ENCODE measurements at regions of chr12 and their contacts with region 1.

Region 1: DNA sequence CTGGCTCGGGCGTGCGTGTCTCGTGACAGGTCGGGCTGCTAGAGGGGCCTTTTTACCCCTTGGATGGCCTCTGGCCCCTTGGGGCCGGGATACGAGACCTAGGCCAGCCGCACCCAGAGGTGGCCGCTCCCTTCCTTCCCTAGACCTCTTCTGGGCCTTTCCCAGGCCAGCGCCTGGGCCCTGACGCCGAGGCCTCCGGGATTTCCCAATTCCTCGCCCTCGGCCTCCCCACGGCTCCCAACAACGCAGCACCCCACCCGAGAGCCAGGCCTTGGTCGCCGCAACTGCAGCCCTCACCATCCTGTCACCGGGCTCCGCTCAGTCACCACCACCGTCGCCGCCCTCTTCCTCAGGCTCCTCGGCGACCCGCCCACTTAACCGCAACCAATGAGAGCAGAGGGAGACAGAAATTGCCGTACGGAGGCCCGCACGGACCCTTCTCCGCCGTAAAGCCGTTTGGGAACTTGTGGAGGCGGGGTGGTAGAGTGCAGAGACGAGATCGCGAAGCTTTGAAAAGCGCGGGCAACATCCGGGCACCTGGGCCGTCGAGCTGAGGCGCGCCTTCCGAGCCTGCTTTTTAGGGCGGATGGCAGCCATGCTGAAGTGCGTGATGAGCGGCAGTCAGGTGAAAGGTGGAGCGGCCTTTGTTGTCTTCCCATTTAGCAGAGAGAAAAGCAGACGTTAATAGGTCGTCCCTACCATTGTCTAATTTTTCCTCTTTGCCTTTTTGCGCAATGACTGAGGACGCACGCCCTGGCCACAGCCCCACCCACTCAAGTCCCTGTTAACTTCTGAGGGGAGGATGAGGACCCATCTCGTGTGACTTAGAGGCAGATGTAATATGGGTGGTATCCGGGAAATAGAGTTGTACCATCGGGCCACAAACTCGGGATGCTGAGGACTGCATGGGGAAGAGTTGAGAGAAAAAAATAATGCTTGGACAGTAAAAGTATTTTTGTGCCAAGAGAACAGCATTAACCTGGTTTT is at the starts of genes RAD9B and VPS29:
- DNase-seq: peak; percentile 98
- H3K4me3 Mint-ChIP-seq: peak within 1 kb of the TSS; percentile 92
- H3K27ac Mint-ChIP-seq: peak within 1 kb of the TSS; percentile 96
- H3K4me1 Mint-ChIP-seq: peaks cover 14% of the 10 kb centered on the region
- H3K27me3 Mint-ChIP-seq: no peaks in the 10 kb centered on the region
- CTCF ChIP-seq: no peak
- total RNA-seq, gene RAD9B: 1.0 and 1.5 TPM in 2 replicates
- total RNA-seq, gene VPS29: 125 and 131 TPM in 2 replicates

Region 2: GRCh38 chr12:110449799-110450497 is 52.1 kb before region 1 on chr12 and contains the start of gene ARPC3:
- CTCF ChIA-PET with region 1: interaction called, 5 read pairs
- POLR2A ChIA-PET with region 1: interaction called, 49 read pairs
- intact Hi-C with region 1: no loop called
- DNase-seq: peak; percentile 93
- H3K4me3 Mint-ChIP-seq: peak within 1 kb of the TSS; percentile 99
- H3K27ac Mint-ChIP-seq: peak within 1 kb of the TSS; percentile 100
- H3K4me1 Mint-ChIP-seq: peaks cover 5% of the 10 kb centered on the region
- H3K27me3 Mint-ChIP-seq: no peaks in the 10 kb centered on the region
- CTCF ChIP-seq: peak; percentile 83
- total RNA-seq, gene ARPC3: 230 and 245 TPM in 2 replicates

Region 3: DNA sequence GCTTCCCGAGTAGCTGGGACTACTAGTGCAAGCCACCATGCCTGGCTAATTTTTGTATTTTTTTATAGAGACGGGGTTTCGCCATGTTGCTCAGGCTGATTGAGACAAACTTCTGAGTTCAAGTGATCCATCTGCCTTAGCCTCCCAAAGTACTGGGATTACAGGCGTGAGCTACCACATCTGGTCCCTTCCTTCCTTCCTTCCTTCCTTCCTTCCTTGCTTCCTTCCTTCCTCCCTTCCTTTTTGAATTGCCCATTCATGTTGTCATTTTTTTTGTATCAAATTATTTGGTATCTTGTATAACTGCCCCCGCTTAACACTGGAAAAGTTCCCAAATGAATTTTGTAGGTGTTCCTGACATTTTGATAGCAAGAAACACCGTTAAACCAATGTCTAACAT is 11.8 kb after region 1 on chr12:
- CTCF ChIA-PET with region 1: interaction called, 12 read pairs
- POLR2A ChIA-PET with region 1: interaction called, 18 read pairs
- intact Hi-C with region 1: no loop called
- DNase-seq: no peak
- H3K4me3 Mint-ChIP-seq: no peak overlapping the region
- H3K27ac Mint-ChIP-seq: peak overlapping the region; percentile 4
- H3K4me1 Mint-ChIP-seq: no peaks in the 10 kb centered on the region
- H3K27me3 Mint-ChIP-seq: no peaks in the 10 kb centered on the region
- CTCF ChIP-seq: no peak

Region 4: DNA sequence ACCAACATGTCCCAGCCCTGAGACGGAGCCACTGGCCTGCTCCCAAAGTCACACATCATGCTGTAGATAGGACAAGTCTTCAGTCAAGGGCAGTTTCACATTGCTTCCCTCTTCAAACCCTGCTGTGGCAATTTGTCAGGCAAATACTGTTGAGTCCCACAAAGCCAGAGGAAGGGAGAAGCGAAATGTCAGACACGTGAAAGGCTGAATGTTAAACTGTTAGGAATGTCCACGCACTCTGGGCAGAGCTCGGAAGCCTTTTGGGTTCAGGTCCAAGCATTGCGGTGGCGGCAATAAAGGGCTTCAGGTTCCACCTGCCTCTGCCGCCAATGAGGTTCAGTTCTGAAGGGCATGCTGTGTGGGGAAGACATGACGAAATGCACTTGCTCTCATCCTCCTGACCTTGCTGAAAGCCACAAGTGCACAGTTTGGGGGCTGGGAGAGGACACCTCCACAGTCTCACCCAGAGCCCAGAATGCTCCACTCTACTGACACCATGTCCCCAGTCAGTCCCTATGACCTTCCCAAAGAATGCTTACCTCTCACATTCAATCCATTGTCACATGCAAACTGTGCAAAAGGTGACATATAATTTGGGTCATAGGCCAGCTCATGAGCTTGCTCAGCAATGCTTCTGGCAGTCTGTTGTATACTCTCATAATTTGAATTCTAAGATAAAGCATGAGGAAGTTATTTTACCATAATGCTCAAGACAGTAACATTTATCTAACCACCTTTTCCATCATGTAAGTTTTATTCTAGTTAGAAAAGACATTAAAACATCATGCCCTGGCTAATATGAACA is 35.8 kb after region 1 on chr12:
- CTCF ChIA-PET with region 1: no interaction called
- POLR2A ChIA-PET with region 1: interaction called, 34 read pairs
- intact Hi-C with region 1: no loop called
- DNase-seq: peak; percentile 97
- H3K4me3 Mint-ChIP-seq: peak overlapping the region; percentile 47
- H3K27ac Mint-ChIP-seq: peak overlapping the region; percentile 69
- H3K4me1 Mint-ChIP-seq: peaks cover 40% of the 10 kb centered on the region
- H3K27me3 Mint-ChIP-seq: no peaks in the 10 kb centered on the region
- CTCF ChIP-seq: no peak

Region 5: DNA sequence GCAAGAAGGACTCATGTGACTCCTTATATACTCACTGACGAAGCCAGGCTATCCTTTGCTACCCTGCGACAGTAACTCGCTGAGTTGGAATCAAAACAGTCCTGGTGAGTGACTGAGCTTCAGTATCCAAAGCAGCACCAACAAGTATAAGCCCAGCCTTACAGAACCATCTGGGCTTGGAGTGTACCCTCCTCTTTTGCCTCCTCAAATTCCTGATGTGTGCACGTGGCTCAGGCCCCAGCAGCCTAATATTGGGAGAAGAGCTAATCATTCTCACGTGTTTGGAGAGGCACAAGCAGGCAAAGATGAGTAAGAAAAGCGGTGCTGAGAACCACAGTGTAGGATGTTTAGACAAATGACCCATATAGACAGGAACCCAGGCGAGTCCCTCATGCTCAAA is 46.6 kb after region 1 on chr12:
- CTCF ChIA-PET with region 1: no interaction called
- POLR2A ChIA-PET with region 1: interaction called, 17 read pairs
- intact Hi-C with region 1: no loop called
- DNase-seq: no peak
- H3K4me3 Mint-ChIP-seq: peak overlapping the region; percentile 66
- H3K27ac Mint-ChIP-seq: peak overlapping the region; percentile 85
- H3K4me1 Mint-ChIP-seq: peaks cover 62% of the 10 kb centered on the region
- H3K27me3 Mint-ChIP-seq: no peaks in the 10 kb centered on the region
- CTCF ChIP-seq: no peak

Region 6: DNA sequence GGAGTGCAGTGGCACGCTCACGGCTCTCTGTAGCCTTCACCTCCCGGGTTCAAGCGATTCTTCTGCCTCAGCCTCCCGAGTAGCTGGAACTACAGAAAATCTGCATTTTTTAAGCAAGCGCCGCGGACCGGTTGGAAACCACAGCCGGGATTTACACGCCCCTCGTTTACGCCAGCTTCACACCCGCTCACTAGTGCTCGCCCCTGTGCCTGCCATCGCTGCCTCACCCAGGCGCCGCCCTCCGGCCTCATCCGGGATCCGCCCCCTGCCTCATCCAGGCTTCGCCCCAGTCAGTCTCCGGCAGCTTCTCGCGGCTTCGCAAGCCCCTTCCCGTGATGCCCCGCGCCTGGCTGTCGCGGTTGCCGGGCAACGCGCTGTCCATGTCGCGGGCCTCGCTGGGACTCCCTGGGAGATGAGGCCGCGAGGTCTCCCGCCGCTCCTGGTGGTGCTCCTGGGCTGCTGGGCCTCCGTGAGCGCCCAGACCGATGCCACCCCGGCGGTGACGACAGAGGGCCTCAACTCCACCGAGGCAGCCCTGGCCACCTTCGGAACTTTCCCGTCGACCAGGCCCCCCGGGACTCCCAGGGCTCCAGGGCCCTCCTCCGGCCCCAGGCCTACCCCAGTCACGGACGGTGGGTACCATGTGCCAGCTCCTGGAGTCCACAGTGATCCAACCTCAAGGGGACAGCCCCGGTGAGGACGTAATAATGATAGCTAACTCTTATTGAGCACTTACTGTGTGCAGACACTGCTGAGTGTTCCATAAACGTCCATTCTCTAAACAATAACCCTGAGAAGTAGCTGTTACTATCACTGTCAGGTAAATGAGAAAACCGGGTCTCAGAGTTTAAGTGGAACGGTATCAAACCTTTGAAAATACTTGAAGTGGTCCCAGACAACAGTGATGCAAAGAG is 112.0 kb after region 1 on chr12 and contains the start of gene TCTN1:
- CTCF ChIA-PET with region 1: no interaction called
- POLR2A ChIA-PET with region 1: interaction called, 11 read pairs
- intact Hi-C with region 1: no loop called
- DNase-seq: peak; percentile 92
- H3K4me3 Mint-ChIP-seq: peak within 1 kb of the TSS; percentile 78
- H3K27ac Mint-ChIP-seq: peak within 1 kb of the TSS; percentile 66
- H3K4me1 Mint-ChIP-seq: no peaks in the 10 kb centered on the region
- H3K27me3 Mint-ChIP-seq: no peaks in the 10 kb centered on the region
- CTCF ChIP-seq: no peak
- total RNA-seq, gene TCTN1: 36.5 and 38.9 TPM in 2 replicates

Region 7: DNA sequence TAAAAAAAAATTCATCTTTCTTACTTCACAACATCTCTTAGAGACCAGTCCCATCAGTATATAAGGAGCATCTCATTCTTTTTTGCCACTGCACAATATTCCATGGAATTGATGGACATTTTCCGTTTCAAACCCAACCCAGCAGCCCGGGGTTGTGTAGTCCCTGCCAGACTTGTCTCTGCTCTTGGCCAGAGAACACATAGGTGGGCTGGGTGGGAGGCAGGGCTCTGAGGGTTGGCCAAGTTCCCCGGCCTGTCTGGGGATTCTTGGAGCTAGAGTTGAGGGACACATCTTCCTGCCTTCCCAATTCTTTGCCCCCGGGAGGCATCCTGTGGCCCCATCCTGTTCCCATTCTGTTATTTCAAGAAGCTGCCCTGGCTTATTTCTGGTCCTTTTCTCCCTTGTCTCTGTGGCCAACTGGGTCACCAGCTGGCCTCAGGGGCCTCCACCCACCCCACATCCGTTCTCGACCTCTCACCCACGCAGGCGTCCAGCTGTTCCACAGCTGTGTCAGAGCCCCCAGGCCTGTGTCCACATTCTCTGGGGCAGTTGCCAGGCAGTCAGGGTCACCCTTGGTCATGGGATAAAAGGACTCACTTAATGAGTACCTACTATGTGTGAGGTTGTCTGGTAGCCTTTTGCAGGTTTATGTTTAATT is 292.7 kb after region 1 on chr12:
- CTCF ChIA-PET with region 1: no interaction called
- POLR2A ChIA-PET with region 1: no interaction called
- intact Hi-C with region 1: no loop called
- DNase-seq: no peak
- H3K4me3 Mint-ChIP-seq: no peak overlapping the region
- H3K27ac Mint-ChIP-seq: no peak overlapping the region
- H3K4me1 Mint-ChIP-seq: no peaks in the 10 kb centered on the region
- H3K27me3 Mint-ChIP-seq: no peaks in the 10 kb centered on the region
- CTCF ChIP-seq: no peak

Region 8: DNA sequence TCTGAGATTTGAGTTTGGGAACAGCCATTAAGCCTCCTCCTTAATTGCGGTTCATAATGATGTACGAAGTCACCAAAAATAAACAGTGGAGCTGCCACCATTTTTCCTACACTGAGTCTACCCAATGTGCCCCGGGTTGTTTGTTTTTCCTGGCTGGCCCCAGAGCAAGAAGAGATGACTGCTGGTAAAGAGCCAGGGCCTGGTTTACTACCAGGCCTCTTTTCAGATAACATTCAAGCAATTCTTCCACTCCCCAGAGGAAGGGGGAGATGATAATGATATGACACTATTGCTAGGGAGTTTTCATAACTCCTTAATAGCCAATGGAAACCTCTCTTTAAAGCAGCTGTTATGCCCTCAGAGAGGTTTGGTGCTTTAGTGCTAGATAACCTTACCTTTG is 1141.4 kb after region 1 on chr12:
- CTCF ChIA-PET with region 1: no interaction called
- POLR2A ChIA-PET with region 1: no interaction called
- intact Hi-C with region 1: no loop called
- DNase-seq: no peak
- H3K4me3 Mint-ChIP-seq: no peak overlapping the region
- H3K27ac Mint-ChIP-seq: no peak overlapping the region
- H3K4me1 Mint-ChIP-seq: no peaks in the 10 kb centered on the region
- H3K27me3 Mint-ChIP-seq: no peaks in the 10 kb centered on the region
- CTCF ChIP-seq: no peak